B cell (primary cell): ENCODE measurements at regions of chr20 and their contacts with region 1.

Region 1: DNA sequence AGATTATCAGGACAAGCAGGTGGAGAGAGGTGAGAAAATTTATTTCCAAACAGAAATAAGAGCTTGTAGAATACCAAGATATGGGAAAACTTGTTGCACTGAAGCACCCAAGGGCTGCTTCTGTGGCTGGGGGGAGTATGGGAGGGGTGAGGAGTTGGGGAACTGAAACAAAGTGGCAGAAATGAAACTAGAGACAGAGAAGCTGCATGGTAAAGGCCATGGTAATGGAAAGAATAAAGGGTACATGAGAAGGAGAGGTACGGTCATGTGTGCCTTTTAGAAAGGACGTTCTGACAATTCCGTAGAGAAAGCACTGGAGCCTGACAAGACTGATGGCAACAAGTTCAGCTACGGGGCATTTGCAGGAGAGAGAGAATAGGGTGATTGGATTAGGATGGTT is 51.6 kb upstream of the RIN2 start:
- DNase-seq: peak; percentile 84
- ATAC-seq: peak; percentile 93
- H3K4me3 ChIP-seq: peak overlapping the region in 1 of 5 experiments; percentile 18
- H3K4me3 Mint-ChIP-seq: no peak overlapping the region
- H3K27ac ChIP-seq: peak overlapping the region; percentile 61 to 65
- H3K27ac Mint-ChIP-seq: no peak overlapping the region
- H3K4me1 ChIP-seq: peaks cover 49 to 53% of the 10 kb centered on the region in 2 donors
- H3K4me1 Mint-ChIP-seq: peaks cover 30% of the 10 kb centered on the region
- H3K27me3 ChIP-seq: no peaks in the 10 kb centered on the region
- H3K27me3 Mint-ChIP-seq: no peaks in the 10 kb centered on the region
- CTCF ChIP-seq: no peak

Region 2: DNA sequence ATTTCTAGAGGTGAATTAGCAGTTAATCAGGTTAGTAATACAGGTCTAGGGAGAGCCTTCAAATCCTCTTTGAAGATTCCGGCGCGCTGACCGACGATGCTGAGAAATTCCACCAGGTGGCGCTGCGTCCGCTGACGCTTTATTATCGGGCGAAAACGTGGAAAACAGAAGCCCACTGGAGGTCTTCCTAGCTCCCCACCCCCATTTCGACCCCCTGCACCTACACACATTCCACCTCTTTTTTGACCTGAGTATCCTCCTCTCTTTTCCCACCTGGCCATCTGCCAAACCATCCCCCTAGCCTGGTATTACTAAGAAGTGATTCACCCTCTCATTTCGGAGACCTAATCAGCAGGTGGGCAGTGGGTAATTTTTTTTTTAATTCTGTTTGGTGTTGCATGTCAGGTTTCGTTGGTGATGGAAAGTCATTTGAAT is 13.8 kb before region 1 on chr20:
- CTCF ChIA-PET with region 1: interaction called, 68 read pairs
- POLR2A ChIA-PET with region 1: interaction called, 3 read pairs
- intact Hi-C with region 1: loop called (anchors 1 kb)
- DNase-seq: peak; percentile 73
- ATAC-seq: peak; percentile 51
- H3K4me3 ChIP-seq: peak overlapping the region in 1 of 5 experiments; percentile 16
- H3K4me3 Mint-ChIP-seq: peak overlapping the region; percentile 60
- H3K27ac ChIP-seq: no peak overlapping the region
- H3K27ac Mint-ChIP-seq: no peak overlapping the region
- H3K4me1 ChIP-seq: peaks cover 5 to 9% of the 10 kb centered on the region in 2 donors
- H3K4me1 Mint-ChIP-seq: peaks cover 6% of the 10 kb centered on the region
- H3K27me3 ChIP-seq: peaks cover 0 to 2% (median 0%) of the 10 kb centered on the region in 4 experiments
- H3K27me3 Mint-ChIP-seq: peaks cover 4% of the 10 kb centered on the region
- CTCF ChIP-seq: peak; percentile 98

Region 3: DNA sequence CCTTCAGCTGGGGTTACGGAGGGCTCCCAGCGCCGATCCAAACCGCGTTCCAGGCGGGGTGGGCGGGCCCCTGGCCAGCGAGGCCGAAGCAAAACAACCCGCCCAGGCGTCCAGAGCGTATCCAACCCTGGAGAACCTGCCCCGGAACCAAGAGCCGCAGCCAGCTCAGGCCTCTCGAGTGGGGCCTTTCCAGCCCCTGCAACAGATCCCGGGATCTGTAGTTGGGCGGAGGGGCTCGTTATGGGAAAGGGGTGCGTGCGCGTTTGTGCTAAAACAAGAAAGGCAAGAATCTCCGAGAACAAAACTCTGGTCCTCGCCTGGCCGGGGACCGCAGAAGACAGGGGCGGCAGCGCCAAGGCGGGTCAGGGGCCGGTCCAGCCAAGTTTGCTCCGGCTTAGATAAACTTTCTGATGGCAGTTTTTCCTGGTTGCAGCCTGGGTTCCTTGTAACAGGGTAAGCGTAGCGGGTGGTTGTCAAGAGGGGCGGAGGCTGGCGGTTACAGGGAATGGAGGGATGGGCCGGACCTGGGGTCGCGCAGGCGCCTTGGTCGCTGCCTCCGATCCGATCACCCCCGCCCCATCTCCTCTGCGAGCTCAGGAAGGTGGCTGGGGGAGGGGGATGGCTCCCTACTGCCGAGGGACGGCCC is 51.1 kb after region 1 on chr20:
- CTCF ChIA-PET with region 1: no interaction called
- POLR2A ChIA-PET with region 1: interaction called, 4 read pairs
- intact Hi-C with region 1: loop called (anchors 5 kb)
- DNase-seq: no peak
- ATAC-seq: peak; percentile 48
- H3K4me3 ChIP-seq: peak overlapping the region; percentile 26 to 65 (median 63)
- H3K4me3 Mint-ChIP-seq: peak overlapping the region; percentile 86
- H3K27ac ChIP-seq: no peak overlapping the region
- H3K27ac Mint-ChIP-seq: peak overlapping the region; percentile 16
- H3K4me1 ChIP-seq: peaks cover 24 to 26% of the 10 kb centered on the region in 2 donors
- H3K4me1 Mint-ChIP-seq: peaks cover 19% of the 10 kb centered on the region
- H3K27me3 ChIP-seq: peaks cover 0 to 34% (median 15%) of the 10 kb centered on the region in 4 experiments
- H3K27me3 Mint-ChIP-seq: peaks cover 46% of the 10 kb centered on the region
- CTCF ChIP-seq: no peak

Region 4: DNA sequence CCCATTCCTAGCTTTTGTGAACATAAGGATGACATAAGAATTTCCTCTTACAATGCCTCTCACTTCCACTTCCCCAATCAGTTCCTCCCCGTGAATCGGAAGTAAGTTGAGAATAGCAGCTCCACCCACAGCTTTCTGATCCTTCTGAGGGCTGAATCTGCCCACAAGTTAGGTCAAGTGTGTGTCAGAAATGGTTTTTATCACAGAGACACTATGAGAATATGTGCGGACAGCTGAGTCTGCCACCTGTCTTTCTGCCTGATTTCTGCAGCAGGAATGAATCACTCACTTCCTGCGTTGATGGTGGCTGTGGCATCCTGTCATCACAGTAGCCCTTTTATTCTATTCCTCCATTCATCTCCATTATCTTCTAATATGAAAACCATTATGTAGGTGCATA is 121.8 kb after region 1 on chr20:
- CTCF ChIA-PET with region 1: interaction called, 8 read pairs
- POLR2A ChIA-PET with region 1: no interaction called
- intact Hi-C with region 1: loop called (anchors 1 kb)
- DNase-seq: peak; percentile 84
- ATAC-seq: peak; percentile 91
- H3K4me3 ChIP-seq: no peak overlapping the region
- H3K4me3 Mint-ChIP-seq: peak overlapping the region; percentile 12
- H3K27ac ChIP-seq: peak overlapping the region; percentile 44 to 48
- H3K27ac Mint-ChIP-seq: peak overlapping the region; percentile 66
- H3K4me1 ChIP-seq: peaks cover 58 to 63% of the 10 kb centered on the region in 2 donors
- H3K4me1 Mint-ChIP-seq: peaks cover 62% of the 10 kb centered on the region
- H3K27me3 ChIP-seq: no peaks in the 10 kb centered on the region
- H3K27me3 Mint-ChIP-seq: peaks cover under 1% of the 10 kb centered on the region
- CTCF ChIP-seq: peak; percentile 50

Region 5: GRCh38 chr20:20017001-20017843 is 310.8 kb after region 1 on chr20 and contains the start of gene NAA20:
- CTCF ChIA-PET with region 1: interaction called, 5 read pairs
- POLR2A ChIA-PET with region 1: no interaction called
- intact Hi-C with region 1: loop called (anchors 1 kb)
- DNase-seq: peak; percentile 91
- ATAC-seq: peak; percentile 98
- H3K4me3 ChIP-seq: peak within 1 kb of the TSS; percentile 41 to 91 (median 83)
- H3K4me3 Mint-ChIP-seq: peak within 1 kb of the TSS; percentile 94
- H3K27ac ChIP-seq: peak within 1 kb of the TSS; percentile 1 to 86
- H3K27ac Mint-ChIP-seq: peak within 1 kb of the TSS; percentile 94
- H3K4me1 ChIP-seq: peaks cover 12 to 27% of the 10 kb centered on the region in 2 donors
- H3K4me1 Mint-ChIP-seq: peaks cover 42% of the 10 kb centered on the region
- H3K27me3 ChIP-seq: no peaks in the 10 kb centered on the region
- H3K27me3 Mint-ChIP-seq: no peaks in the 10 kb centered on the region
- CTCF ChIP-seq: peak; percentile 73
- total RNA-seq, gene NAA20: 25.5 and 27.1 TPM in 2 replicates